Heart right ventricle (tissue), 16 donors: ENCODE measurements at regions of chrX and their contacts with region 1.

Region 1: DNA sequence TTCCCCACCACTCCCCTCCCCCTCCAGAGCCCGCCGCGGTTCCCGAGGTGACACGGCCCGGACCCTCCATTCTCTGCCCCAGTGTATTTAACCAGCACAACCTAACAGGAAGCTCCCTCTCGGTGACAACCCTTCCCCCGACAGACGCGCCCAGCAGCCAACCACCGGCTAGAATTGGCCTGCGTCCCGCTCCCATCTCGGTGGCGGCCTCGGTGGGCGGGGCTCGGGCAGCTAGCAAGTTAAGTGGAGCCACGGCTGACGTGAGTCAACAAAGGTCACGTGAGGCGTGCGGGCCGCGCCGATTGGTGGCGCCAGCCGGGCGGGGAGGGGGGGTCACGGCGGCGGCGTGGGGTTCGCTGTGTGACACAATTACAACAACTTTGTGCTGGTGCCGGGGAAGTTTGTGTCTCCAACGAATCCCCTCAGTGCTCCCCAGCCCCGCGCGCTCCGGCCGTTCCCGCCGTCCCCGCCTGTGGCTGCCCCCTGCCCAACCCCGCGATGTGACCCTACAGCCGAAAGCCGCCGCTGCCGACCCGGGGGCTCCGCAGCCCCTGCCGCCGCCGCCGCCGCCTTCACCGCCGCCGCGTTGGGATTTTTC is at the start of gene KDM6A:
- DNase-seq: peak; percentile 96 to 97
- ATAC-seq: peak; percentile 92 to 97 (median 96)
- H3K4me3 ChIP-seq: peak within 1 kb of the TSS; percentile 79 to 96 (median 89)
- H3K27ac ChIP-seq: peak within 1 kb of the TSS; percentile 93 to 100 (median 97)
- H3K4me1 ChIP-seq: peaks cover 0 to 51% (median 24%) of the 10 kb centered on the region in 9 donors
- H3K27me3 ChIP-seq: no peaks in the 10 kb centered on the region
- CTCF ChIP-seq: no peak
- total RNA-seq, gene KDM6A: 10.2 to 21.2 (median 12.9) TPM

Region 2: GRCh38 chrX:44542567-44543325 is 330.2 kb before region 1 on chrX and contains the start of gene FUNDC1:
- intact Hi-C with region 1: loop called in 1 of 10 experiments (anchors 5 kb)
- DNase-seq: peak; percentile 93 to 94
- ATAC-seq: peak; percentile 98 to 100 (median 99)
- H3K4me3 ChIP-seq: peak within 1 kb of the TSS; percentile 38 to 81 (median 70)
- H3K27ac ChIP-seq: peak within 1 kb of the TSS in 9 of 10 donors; percentile 48 to 92 (median 82)
- H3K4me1 ChIP-seq: peaks cover 0 to 19% (median 10%) of the 10 kb centered on the region in 9 donors
- H3K27me3 ChIP-seq: peaks cover 0 to 8% (median 0%) of the 10 kb centered on the region in 7 donors
- CTCF ChIP-seq: peak in 6 of 9 donors; percentile 18 to 44 (median 34)
- total RNA-seq, gene FUNDC1: 23.0 to 32.1 (median 26.4) TPM

Region 3: DNA sequence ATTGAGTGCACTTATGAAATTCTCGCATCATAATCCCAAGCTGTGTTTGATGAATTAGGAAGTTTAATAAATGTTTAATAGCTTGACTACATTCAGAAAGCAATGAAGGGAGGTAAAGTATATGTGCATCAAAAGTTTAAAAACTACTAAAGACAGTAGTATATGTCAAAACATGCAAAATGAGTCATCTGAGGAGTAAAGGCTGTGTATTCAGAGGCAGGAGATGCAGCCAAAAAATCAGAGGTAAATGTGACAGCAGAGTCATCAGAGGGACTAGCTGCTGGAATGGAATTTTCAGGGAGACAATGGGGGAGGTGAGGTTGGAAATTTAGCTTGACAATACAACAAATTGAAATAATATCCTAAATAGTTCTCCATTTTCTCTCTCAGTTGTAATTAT is 203.3 kb before region 1 on chrX:
- intact Hi-C with region 1: no loop called
- DNase-seq: no peak
- ATAC-seq: no peak
- H3K4me3 ChIP-seq: no peak overlapping the region
- H3K27ac ChIP-seq: no peak overlapping the region
- H3K4me1 ChIP-seq: no peaks in the 10 kb centered on the region
- H3K27me3 ChIP-seq: peaks cover 0 to 44% (median 0%) of the 10 kb centered on the region in 7 donors
- CTCF ChIP-seq: no peak

Region 4: GRCh38 chrX:44922980-44923379 is 50.1 kb after region 1 on chrX:
- intact Hi-C with region 1: no loop called
- DNase-seq: no peak
- ATAC-seq: no peak
- H3K4me3 ChIP-seq: no peak overlapping the region
- H3K27ac ChIP-seq: no peak overlapping the region
- H3K4me1 ChIP-seq: peaks cover 0 to 52% (median 7%) of the 10 kb centered on the region in 9 donors
- H3K27me3 ChIP-seq: no peaks in the 10 kb centered on the region
- CTCF ChIP-seq: no peak

Region 5: DNA sequence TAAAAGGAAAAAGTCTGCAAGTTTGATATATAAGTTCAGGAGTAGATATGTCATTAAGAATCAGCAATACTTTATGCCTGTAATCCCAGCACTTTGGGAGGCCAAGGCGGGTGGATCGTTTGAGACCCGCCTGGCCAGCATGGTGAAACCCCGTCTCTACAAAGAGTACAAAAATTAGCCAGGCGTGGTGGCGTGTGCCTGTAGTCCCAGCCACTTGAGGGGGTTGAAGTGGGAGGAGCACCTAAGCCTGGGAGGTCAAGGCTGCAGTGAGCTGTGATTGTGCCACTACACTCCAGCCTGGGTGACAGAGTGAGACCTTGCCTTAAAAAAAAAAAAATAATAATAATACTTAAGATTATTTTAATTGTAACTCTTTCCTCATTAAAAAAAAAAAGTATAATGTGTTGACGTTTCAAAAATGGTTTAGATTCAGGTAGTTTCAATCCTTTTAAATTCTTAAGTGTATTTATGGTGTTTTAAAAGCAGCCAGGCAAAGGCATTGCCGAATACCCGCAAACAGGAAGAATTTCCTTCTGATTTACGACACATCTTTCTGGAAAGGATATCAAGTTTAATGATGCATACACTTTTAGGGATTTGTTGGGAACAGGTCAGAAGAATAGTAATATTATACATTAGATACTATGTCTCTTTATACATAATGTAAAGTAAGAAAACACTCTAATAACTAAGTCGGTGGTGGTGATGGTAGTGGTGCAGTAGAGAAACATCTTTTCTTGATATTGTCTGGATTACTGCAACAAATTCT is 81.0 kb after region 1 on chrX:
- intact Hi-C with region 1: loop called in 2 of 10 experiments (anchors 10 kb)
- DNase-seq: no peak
- ATAC-seq: peak in 1 of 8 donors; percentile 37
- H3K4me3 ChIP-seq: no peak overlapping the region
- H3K27ac ChIP-seq: no peak overlapping the region
- H3K4me1 ChIP-seq: peaks cover 2 to 65% (median 41%) of the 10 kb centered on the region in 9 donors
- H3K27me3 ChIP-seq: no peaks in the 10 kb centered on the region
- CTCF ChIP-seq: no peak

Region 6: DNA sequence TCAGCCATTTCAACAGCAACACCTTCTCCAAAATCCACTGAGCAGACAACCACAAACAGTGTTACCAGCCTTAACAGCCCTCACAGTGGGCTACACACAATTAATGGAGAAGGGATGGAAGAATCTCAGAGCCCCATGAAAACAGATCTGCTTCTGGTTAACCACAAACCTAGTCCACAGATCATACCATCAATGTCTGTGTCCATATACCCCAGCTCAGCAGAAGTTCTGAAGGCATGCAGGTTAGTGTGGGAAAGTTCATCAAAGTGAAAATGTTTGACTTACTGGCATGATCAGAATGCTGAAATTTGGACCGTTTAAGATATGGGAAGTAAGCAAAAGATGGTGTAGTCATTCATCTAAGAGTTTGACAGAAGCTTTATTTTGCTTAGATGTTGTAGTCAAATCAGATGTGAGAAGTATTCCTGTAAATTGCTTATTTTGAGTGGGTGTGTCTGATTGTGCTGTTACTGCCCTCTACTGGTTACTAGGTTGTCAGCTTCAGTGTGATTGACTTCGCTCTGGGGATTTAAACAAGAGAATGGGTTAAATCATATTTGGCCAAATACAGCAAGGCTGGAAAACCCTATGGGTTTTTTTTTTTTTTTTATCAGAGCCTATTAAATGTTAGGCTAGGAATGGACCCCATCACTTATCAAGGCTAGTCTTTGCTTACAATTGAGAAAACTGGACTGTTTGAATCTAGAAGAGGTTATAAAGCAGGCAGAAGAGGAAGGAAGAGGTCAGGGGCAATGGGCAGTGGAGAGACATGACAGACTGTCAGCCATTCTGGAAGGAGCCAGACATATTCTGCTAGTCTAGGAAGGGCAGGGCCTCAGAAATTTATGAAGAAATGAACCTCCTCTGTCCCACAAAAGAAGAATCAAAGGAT is 197.4 kb after region 1 on chrX:
- intact Hi-C with region 1: loop called in 7 of 10 experiments (anchors 2 to 10 kb)
- DNase-seq: peak in 1 of 2 donors; percentile 8
- ATAC-seq: peak in 3 of 8 donors; percentile 39 to 64 (median 51)
- H3K4me3 ChIP-seq: no peak overlapping the region
- H3K27ac ChIP-seq: peak overlapping the region in 1 of 10 donors; percentile 39
- H3K4me1 ChIP-seq: peaks cover 0 to 61% (median 12%) of the 10 kb centered on the region in 9 donors
- H3K27me3 ChIP-seq: no peaks in the 10 kb centered on the region
- CTCF ChIP-seq: peak in 8 of 9 donors; percentile 29 to 84 (median 59)

Region 7: GRCh38 chrX:45200741-45201234 is 327.9 kb after region 1 on chrX and contains the start of gene DIPK2B:
- intact Hi-C with region 1: loop called in 1 of 10 experiments (anchors 5 kb)
- DNase-seq: peak; percentile 23 to 60
- ATAC-seq: peak; percentile 85 to 95 (median 91)
- H3K4me3 ChIP-seq: peak within 1 kb of the TSS in 9 of 10 donors; percentile 26 to 54 (median 46)
- H3K27ac ChIP-seq: peak within 1 kb of the TSS; percentile 40 to 86 (median 72)
- H3K4me1 ChIP-seq: peaks cover 0 to 21% (median 0%) of the 10 kb centered on the region in 9 donors
- H3K27me3 ChIP-seq: peaks cover 0 to 81% (median 0%) of the 10 kb centered on the region in 7 donors
- CTCF ChIP-seq: no peak
- total RNA-seq, gene DIPK2B: 9.3 to 31.7 (median 16.1) TPM